HepG2 (cell line): ENCODE measurements at regions of chr9 and their contacts with region 1.

Region 1: GRCh38 chr9:136991993-136992818 is at the start of gene PAXX:
- DNase-seq: peak; percentile 70
- ATAC-seq: peak; percentile 72
- H3K4me3 ChIP-seq: peak within 1 kb of the TSS; percentile 61 to 83 (median 73)
- H3K27ac ChIP-seq: peak within 1 kb of the TSS; percentile 52
- H3K4me1 ChIP-seq: peaks cover 64% of the 10 kb centered on the region
- H3K27me3 ChIP-seq: peaks cover 3 to 9% of the 10 kb centered on the region in 2 experiments; a peak in 2 of 5 replicates
- CTCF ChIP-seq: no peak
- EP300 ChIP-seq: no peak
- POLR2A ChIP-seq: peak in 1 of 2 experiments; percentile 62; a peak in 2 of 4 replicates
- RAD21 ChIP-seq: peak; percentile 17; the same call in 1 of the 2 replicates
- total RNA-seq, gene PAXX: 20.7 and 31.9 TPM in 2 replicates

Region 2: DNA sequence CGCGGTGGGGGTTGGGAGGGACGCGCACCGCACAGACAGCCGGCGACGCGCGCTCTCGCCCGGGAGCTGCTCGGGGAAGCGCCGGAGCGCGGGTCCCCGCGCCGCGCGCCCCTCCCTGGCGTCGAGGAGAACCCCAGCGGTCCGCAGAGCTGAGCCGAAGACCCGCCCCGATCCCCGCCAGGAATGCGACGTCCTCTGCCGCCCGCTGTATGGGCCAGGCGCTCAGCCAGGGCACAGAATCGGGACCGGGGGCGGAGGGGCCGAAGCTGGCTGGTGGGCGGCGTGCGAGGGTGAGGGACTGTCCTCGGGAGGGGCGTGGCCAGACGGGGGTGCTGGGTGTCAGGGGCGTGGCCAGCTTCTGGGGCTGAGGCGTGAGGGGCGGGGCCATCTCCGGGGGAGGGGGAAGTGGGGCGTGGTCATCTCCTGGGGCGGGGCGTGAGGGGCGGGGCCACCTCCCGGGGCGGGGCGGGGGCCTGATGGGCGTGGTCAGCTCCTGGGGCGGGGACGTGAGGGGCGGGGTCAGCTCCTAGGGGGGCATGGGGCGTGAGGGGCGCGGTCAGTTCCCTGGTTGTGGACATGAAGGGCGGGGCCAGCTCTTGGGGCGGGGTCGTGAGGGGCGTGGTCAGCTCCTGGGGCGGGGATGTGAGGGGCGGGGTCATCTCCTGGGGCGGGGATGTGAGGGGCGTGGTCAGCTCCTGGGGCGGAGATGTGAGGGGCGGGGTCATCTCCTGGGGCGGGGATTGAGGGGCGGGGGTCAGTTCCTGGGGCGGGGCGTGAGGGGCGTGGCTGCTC is 13.9 kb before region 1 on chr9:
- CTCF ChIA-PET with region 1: no interaction called
- POLR2A ChIA-PET with region 1: interaction called, 13 read pairs
- in situ Hi-C with region 1: no loop called
- intact Hi-C with region 1: no loop called
- DNase-seq: no peak
- ATAC-seq: peak; percentile 3; the same call in 1 of the 3 replicates
- H3K4me3 ChIP-seq: no peak overlapping the region; a peak in 1 of 6 replicates
- H3K27ac ChIP-seq: no peak overlapping the region
- H3K4me1 ChIP-seq: peaks cover 41% of the 10 kb centered on the region
- H3K27me3 ChIP-seq: peaks cover 11 to 60% of the 10 kb centered on the region in 2 experiments
- CTCF ChIP-seq: no peak
- EP300 ChIP-seq: no peak
- POLR2A ChIP-seq: no peak
- RAD21 ChIP-seq: no peak

Region 3: GRCh38 chr9:137150617-137151457 is 158.6 kb after region 1 on chr9:
- CTCF ChIA-PET with region 1: no interaction called
- POLR2A ChIA-PET with region 1: no interaction called
- in situ Hi-C with region 1: no loop called
- intact Hi-C with region 1: no loop called
- DNase-seq: peak; percentile 84
- ATAC-seq: peak; percentile 19
- H3K4me3 ChIP-seq: no peak overlapping the region
- H3K27ac ChIP-seq: no peak overlapping the region
- H3K4me1 ChIP-seq: peaks cover 30% of the 10 kb centered on the region
- H3K27me3 ChIP-seq: peaks cover 8 to 38% of the 10 kb centered on the region in 2 experiments; a peak in 4 of 5 replicates
- CTCF ChIP-seq: no peak
- EP300 ChIP-seq: no peak
- POLR2A ChIP-seq: no peak
- RAD21 ChIP-seq: no peak

Region 4: DNA sequence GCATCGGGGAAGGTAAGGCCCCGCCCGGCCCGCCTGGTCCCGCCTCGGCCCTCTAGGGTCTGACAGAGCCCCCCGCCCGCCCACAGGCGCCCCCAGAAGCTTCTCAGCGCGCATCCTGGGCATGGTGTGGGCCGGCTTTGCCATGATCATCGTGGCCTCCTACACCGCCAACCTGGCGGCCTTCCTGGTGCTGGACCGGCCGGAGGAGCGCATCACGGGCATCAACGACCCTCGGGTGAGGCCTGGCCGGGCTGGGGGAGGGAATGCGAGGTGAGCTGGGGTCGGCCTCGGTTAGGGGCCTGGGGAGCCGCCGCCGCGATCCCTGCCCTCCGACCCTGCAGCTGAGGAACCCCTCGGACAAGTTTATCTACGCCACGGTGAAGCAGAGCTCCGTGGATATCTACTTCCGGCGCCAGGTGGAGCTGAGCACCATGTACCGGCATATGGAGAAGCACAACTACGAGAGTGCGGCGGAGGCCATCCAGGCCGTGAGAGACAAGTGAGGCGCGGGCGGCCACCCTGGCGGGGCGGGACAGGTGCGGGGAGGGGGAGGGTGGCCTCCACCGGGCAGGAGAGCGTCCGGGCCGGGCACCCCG is 170.4 kb after region 1 on chr9:
- CTCF ChIA-PET with region 1: no interaction called
- POLR2A ChIA-PET with region 1: no interaction called
- in situ Hi-C with region 1: no loop called
- intact Hi-C with region 1: no loop called
- DNase-seq: no peak
- ATAC-seq: peak; percentile 67
- H3K4me3 ChIP-seq: peak overlapping the region; percentile 34 to 62 (median 47); a peak in 4 of 6 replicates
- H3K27ac ChIP-seq: no peak overlapping the region
- H3K4me1 ChIP-seq: no peaks in the 10 kb centered on the region
- H3K27me3 ChIP-seq: peaks cover 23 to 91% of the 10 kb centered on the region in 2 experiments; a peak in 4 of 5 replicates
- CTCF ChIP-seq: peak; percentile 64
- EP300 ChIP-seq: no peak
- POLR2A ChIP-seq: no peak
- RAD21 ChIP-seq: no peak